WTC11 (cell line): ENCODE measurements at regions of chr4 and their contacts with region 1.

Region 1: GRCh38 chr4:154618708-154619315 is 6.4 kb upstream of the FGG start:
- DNase-seq: peak; percentile 74
- ATAC-seq: peak; percentile 92
- H3K4me3 Mint-ChIP-seq: no peak overlapping the region
- H3K27ac Mint-ChIP-seq: no peak overlapping the region
- H3K4me1 Mint-ChIP-seq: peaks cover 18% of the 10 kb centered on the region
- H3K27me3 Mint-ChIP-seq: no peaks in the 10 kb centered on the region; the same call in 1 of the 2 replicates
- CTCF ChIP-seq: peak; percentile 51

Region 2: DNA sequence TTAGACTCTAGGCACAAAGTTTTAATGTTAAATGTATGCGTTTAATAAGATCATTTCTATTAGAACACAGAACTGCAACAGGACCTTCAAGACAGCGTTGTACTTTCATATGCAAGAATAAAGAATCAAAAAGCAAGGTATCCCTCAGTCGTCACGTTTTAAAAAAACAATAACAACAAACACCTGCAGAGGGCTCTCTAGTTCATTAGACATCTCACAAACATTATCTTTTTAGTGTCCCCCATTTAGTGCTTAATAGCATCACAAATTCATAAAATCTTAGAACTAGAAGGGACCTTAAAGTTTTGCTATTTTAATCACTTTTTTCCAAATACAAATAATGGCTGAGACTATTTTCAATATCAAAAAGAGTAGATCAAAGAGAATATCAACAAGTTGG is 363.8 kb before region 1 on chr4:
- CTCF ChIA-PET with region 1: no interaction called
- POLR2A ChIA-PET with region 1: no interaction called
- DNase-seq: no peak
- ATAC-seq: no peak
- H3K4me3 Mint-ChIP-seq: no peak overlapping the region
- H3K27ac Mint-ChIP-seq: no peak overlapping the region
- H3K4me1 Mint-ChIP-seq: peaks cover 3% of the 10 kb centered on the region; the same call in 1 of the 2 replicates
- H3K27me3 Mint-ChIP-seq: no peaks in the 10 kb centered on the region
- CTCF ChIP-seq: no peak

Region 3: GRCh38 chr4:154435895-154436294 is 182.9 kb before region 1 on chr4:
- CTCF ChIA-PET with region 1: no interaction called
- POLR2A ChIA-PET with region 1: no interaction called
- DNase-seq: no peak
- ATAC-seq: no peak
- H3K4me3 Mint-ChIP-seq: no peak overlapping the region
- H3K27ac Mint-ChIP-seq: no peak overlapping the region
- H3K4me1 Mint-ChIP-seq: no peaks in the 10 kb centered on the region
- H3K27me3 Mint-ChIP-seq: no peaks in the 10 kb centered on the region
- CTCF ChIP-seq: no peak

Region 4: GRCh38 chr4:154471032-154471431 is 147.8 kb before region 1 on chr4:
- CTCF ChIA-PET with region 1: no interaction called
- POLR2A ChIA-PET with region 1: no interaction called
- DNase-seq: no peak
- ATAC-seq: no peak
- H3K4me3 Mint-ChIP-seq: no peak overlapping the region
- H3K27ac Mint-ChIP-seq: no peak overlapping the region
- H3K4me1 Mint-ChIP-seq: no peaks in the 10 kb centered on the region
- H3K27me3 Mint-ChIP-seq: no peaks in the 10 kb centered on the region
- CTCF ChIP-seq: no peak

Region 5: GRCh38 chr4:154559494-154560418 is 59.1 kb before region 1 on chr4:
- CTCF ChIA-PET with region 1: interaction called, 145 read pairs
- POLR2A ChIA-PET with region 1: no interaction called
- DNase-seq: peak; percentile 17
- ATAC-seq: peak; percentile 98
- H3K4me3 Mint-ChIP-seq: no peak overlapping the region
- H3K27ac Mint-ChIP-seq: no peak overlapping the region
- H3K4me1 Mint-ChIP-seq: no peaks in the 10 kb centered on the region
- H3K27me3 Mint-ChIP-seq: no peaks in the 10 kb centered on the region
- CTCF ChIP-seq: no peak

Region 6: DNA sequence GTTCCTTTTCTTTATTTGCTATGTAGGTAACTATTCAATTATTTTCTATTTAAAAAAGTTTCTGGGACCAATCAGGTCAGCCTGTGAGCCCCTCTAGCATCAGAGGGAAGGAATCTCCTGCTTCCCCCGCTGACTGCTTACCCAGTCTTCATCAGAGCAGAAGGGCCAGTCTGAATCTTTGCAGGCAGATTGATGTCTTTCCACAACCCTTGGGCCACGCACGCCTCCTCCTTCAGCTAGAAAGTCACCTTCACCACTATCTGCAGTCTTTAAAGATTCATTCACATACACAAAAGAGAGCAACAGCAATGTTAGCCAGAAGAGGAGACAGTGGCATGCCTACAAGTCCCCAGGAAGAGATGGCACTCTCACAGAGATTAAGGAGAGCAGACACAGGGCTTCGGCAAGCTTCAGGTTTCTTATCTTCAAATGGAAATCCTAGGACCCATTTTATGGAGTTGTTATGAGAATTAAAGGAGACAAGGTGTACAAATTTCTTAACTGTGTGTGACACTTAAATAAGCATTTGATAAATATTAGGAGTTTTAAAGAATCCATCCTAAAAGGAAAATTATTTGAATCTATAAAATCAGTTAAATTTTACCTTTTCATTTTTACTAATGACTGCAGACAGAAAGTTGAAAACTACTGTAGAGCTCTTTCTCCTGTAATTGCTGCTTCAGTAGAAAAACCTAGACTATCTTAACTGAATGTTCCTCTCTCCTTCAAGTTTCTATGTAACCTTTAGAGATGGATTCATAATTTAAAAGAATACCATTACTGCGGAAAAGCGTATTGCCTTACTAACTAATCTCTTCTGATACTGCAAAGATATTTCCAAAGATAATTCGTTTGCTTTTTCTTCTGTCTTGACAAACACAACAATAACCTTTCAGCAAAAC is 29.3 kb before region 1 on chr4:
- CTCF ChIA-PET with region 1: interaction called, 16 read pairs
- POLR2A ChIA-PET with region 1: no interaction called
- DNase-seq: no peak
- ATAC-seq: peak; percentile 32; the same call in 1 of the 2 replicates
- H3K4me3 Mint-ChIP-seq: no peak overlapping the region
- H3K27ac Mint-ChIP-seq: no peak overlapping the region; the same call in 1 of the 2 replicates
- H3K4me1 Mint-ChIP-seq: peaks cover 3% of the 10 kb centered on the region
- H3K27me3 Mint-ChIP-seq: no peaks in the 10 kb centered on the region
- CTCF ChIP-seq: no peak

Region 7: DNA sequence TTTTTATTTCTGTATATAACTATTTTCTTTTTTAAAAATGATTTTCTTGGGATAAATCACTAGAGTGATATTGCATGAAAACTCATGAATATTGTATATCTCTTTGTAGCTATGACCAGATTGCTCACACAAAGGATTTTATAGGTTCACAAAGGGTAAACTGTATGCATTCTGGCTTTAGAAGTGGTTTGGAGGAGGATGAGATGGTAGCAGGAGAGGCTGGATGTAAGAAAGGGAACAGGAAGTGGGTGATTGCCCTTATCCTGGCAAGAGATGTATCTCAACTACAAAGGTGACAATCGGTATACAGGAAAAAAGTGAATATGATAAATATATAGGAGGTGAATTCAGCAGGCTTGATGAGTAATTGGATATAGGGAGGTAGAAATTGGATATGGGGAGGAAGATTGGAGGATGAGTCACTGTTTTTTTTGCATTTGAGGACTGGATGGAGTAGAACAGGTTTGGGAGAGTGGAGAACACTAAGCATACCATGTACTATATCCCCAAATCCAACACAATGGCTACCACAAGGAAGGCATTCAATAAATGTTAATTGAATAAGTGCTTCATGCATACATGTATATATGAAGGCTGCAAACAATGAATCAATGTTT is 16.3 kb before region 1 on chr4:
- CTCF ChIA-PET with region 1: interaction called, 12 read pairs
- POLR2A ChIA-PET with region 1: no interaction called
- DNase-seq: no peak
- ATAC-seq: no peak
- H3K4me3 Mint-ChIP-seq: no peak overlapping the region
- H3K27ac Mint-ChIP-seq: no peak overlapping the region
- H3K4me1 Mint-ChIP-seq: peaks cover 16% of the 10 kb centered on the region
- H3K27me3 Mint-ChIP-seq: no peaks in the 10 kb centered on the region
- CTCF ChIP-seq: no peak